Activated CD8-positive, alpha-beta T cell treated with anti-CD3 and anti-CD28 coated beads, Interleukin-2, amount 10 ng/mL, durations not matched to agents 7 days and 5 days (primary cell): ENCODE measurements at regions of chr3 and their contacts with region 1.

Region 1: DNA sequence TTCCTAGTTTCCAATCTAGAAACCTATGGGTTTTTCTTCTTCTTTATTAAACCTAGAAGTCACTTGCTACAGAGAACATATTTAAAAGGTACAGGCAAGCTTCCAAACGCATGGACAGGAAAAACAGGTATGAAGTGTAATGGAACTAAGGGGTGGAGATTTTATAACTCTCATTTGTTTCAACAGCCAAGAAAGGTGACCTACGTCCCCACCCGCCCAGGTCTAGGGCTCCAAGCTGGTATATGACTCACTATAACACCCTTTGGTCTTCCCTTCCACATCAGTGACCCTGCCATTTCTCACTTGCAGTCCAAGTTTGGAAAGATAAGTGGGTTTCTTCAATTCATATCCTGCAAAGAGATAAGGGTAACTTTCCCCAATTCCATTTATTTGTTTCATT is 6.0 kb upstream of the LIPH start:
- DNase-seq: no peak
- ATAC-seq: no peak
- H3K4me3 Mint-ChIP-seq: no peak overlapping the region
- H3K27ac Mint-ChIP-seq: no peak overlapping the region
- H3K4me1 Mint-ChIP-seq: peaks cover 17% of the 10 kb centered on the region
- H3K27me3 Mint-ChIP-seq: peaks cover under 1% of the 10 kb centered on the region

Region 2: GRCh38 chr3:185460719-185461350 is 97.6 kb before region 1 on chr3:
- CTCF ChIA-PET with region 1: interaction called, 17 read pairs
- POLR2A ChIA-PET with region 1: no interaction called
- DNase-seq: no peak
- ATAC-seq: no peak
- H3K4me3 Mint-ChIP-seq: no peak overlapping the region
- H3K27ac Mint-ChIP-seq: no peak overlapping the region
- H3K4me1 Mint-ChIP-seq: no peaks in the 10 kb centered on the region
- H3K27me3 Mint-ChIP-seq: no peaks in the 10 kb centered on the region

Region 3: GRCh38 chr3:185572183-185572582 is 13.8 kb after region 1 on chr3:
- CTCF ChIA-PET with region 1: interaction called, 15 read pairs
- POLR2A ChIA-PET with region 1: no interaction called
- DNase-seq: no peak
- ATAC-seq: no peak
- H3K4me3 Mint-ChIP-seq: no peak overlapping the region
- H3K27ac Mint-ChIP-seq: no peak overlapping the region
- H3K4me1 Mint-ChIP-seq: peaks cover 8% of the 10 kb centered on the region
- H3K27me3 Mint-ChIP-seq: no peaks in the 10 kb centered on the region

Region 4: GRCh38 chr3:185623939-185624665 is 65.7 kb after region 1 on chr3:
- CTCF ChIA-PET with region 1: no interaction called
- POLR2A ChIA-PET with region 1: no interaction called
- DNase-seq: no peak
- ATAC-seq: no peak
- H3K4me3 Mint-ChIP-seq: no peak overlapping the region
- H3K27ac Mint-ChIP-seq: no peak overlapping the region
- H3K4me1 Mint-ChIP-seq: peaks cover 11% of the 10 kb centered on the region
- H3K27me3 Mint-ChIP-seq: no peaks in the 10 kb centered on the region